PC-9 (cell line): ENCODE measurements at regions of chr19 and their contacts with region 1.

Region 1: GRCh38 chr19:41706741-41707501 is 1.5 kb upstream of the CEACAM5 start:
- DNase-seq: peak; percentile 69 to 81
- H3K4me3 ChIP-seq: peak overlapping the region; percentile 60; the same call in 1 of the 2 replicates
- H3K27ac ChIP-seq: no peak overlapping the region
- H3K4me1 ChIP-seq: peaks cover 18% of the 10 kb centered on the region
- H3K27me3 ChIP-seq: no peaks in the 10 kb centered on the region
- CTCF ChIP-seq: peak; percentile 99

Region 2: GRCh38 chr19:41626877-41627276 is 80.0 kb before region 1 on chr19 and contains the start of gene CEACAM4:
- CTCF ChIA-PET with region 1: no interaction called
- POLR2A ChIA-PET with region 1: no interaction called
- intact Hi-C with region 1: no loop called
- DNase-seq: no peak
- H3K4me3 ChIP-seq: no peak within 1 kb of the TSS
- H3K27ac ChIP-seq: no peak within 1 kb of the TSS
- H3K4me1 ChIP-seq: no peaks in the 10 kb centered on the region
- H3K27me3 ChIP-seq: peaks cover 92% of the 10 kb centered on the region
- CTCF ChIP-seq: no peak
- total RNA-seq, gene CEACAM4: not detected in 2 replicates

Region 3: GRCh38 chr19:41671491-41671890 is 35.4 kb before region 1 on chr19:
- CTCF ChIA-PET with region 1: no interaction called
- POLR2A ChIA-PET with region 1: no interaction called
- intact Hi-C with region 1: no loop called
- DNase-seq: no peak
- H3K4me3 ChIP-seq: no peak overlapping the region
- H3K27ac ChIP-seq: no peak overlapping the region
- H3K4me1 ChIP-seq: no peaks in the 10 kb centered on the region
- H3K27me3 ChIP-seq: peaks cover 55% of the 10 kb centered on the region
- CTCF ChIP-seq: no peak

Region 4: DNA sequence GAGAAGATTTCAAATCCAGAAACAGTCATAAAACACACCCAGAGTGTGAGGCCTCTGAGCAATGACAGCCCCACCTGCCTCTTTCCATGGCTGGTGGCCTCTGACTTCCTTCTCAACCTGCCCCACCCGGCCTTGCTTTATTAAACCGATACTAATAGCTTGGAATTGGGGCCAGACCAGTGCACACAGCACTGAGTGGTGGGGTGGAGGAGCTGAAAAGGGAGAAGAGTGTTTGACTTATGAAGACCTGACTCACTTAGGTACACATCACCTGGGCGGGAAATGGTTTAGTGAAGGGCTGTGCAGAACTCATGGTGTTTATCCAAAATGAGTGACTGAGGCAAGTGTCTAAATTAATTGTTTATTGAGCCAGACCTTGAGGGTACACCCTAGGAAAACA is 27.7 kb after region 1 on chr19:
- CTCF ChIA-PET with region 1: interaction called, 10 read pairs
- POLR2A ChIA-PET with region 1: no interaction called
- intact Hi-C with region 1: no loop called
- DNase-seq: peak; percentile 55 to 98
- H3K4me3 ChIP-seq: peak overlapping the region; percentile 17; the same call in 1 of the 2 replicates
- H3K27ac ChIP-seq: peak overlapping the region; percentile 100
- H3K4me1 ChIP-seq: peaks cover 92% of the 10 kb centered on the region
- H3K27me3 ChIP-seq: no peaks in the 10 kb centered on the region
- CTCF ChIP-seq: no peak

Region 5: GRCh38 chr19:41785653-41786052 is 78.7 kb after region 1 on chr19:
- CTCF ChIA-PET with region 1: interaction called, 10 read pairs
- POLR2A ChIA-PET with region 1: no interaction called
- intact Hi-C with region 1: loop called (anchors 1 kb)
- DNase-seq: peak; percentile 77 to 79
- H3K4me3 ChIP-seq: no peak overlapping the region
- H3K27ac ChIP-seq: peak overlapping the region; percentile 51
- H3K4me1 ChIP-seq: peaks cover 56% of the 10 kb centered on the region
- H3K27me3 ChIP-seq: no peaks in the 10 kb centered on the region
- CTCF ChIP-seq: peak; percentile 92

Region 6: DNA sequence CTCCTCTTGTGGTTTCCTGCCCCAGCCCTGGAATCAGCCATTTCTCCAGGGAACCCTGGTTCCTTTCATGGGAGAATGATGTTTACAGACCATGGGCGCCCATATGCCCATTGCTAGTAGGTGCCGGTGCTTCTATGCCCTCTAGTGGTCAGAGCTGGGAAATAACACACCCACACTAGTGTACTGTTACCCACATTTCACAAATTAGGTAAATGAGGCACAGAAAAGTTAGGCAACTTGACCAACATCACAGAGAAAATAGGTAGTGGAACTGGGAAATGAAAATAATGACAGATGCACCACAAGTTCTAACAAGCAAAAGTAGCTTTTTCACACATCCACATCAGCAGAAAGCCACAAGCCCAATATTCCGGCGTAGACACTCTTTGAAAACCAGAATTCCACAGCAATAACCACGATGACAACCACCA is 88.1 kb after region 1 on chr19:
- CTCF ChIA-PET with region 1: interaction called, 3 read pairs
- POLR2A ChIA-PET with region 1: no interaction called
- intact Hi-C with region 1: loop called (anchors 2 kb)
- DNase-seq: peak in 1 of 2 experiments; percentile 57
- H3K4me3 ChIP-seq: no peak overlapping the region
- H3K27ac ChIP-seq: no peak overlapping the region
- H3K4me1 ChIP-seq: peaks cover 60% of the 10 kb centered on the region
- H3K27me3 ChIP-seq: no peaks in the 10 kb centered on the region
- CTCF ChIP-seq: peak; percentile 93

Region 7: DNA sequence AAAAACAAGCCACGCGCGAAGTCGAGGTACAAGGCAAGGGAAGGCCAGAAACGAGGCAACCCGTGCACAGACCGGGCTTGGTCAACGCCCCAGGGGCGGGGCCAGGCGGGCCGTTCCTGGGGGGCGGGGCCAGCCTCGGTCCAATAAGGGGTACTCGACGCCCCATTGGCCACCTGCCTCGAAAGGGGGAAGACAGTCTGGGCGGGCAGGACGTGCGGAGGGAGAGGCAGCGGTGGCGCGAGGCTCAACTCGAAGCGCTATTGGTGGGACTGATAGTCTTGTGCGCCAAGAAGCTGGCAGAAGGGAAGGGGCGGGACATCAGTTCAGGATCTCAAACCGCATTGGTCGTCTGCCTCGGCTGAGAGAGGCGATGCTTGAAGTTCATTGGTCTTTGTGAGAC is 137.7 kb after region 1 on chr19 and contains the start of gene LYPD4:
- CTCF ChIA-PET with region 1: no interaction called
- POLR2A ChIA-PET with region 1: no interaction called
- intact Hi-C with region 1: no loop called
- DNase-seq: no peak
- H3K4me3 ChIP-seq: no peak within 1 kb of the TSS
- H3K27ac ChIP-seq: no peak within 1 kb of the TSS
- H3K4me1 ChIP-seq: no peaks in the 10 kb centered on the region
- H3K27me3 ChIP-seq: peaks cover 14% of the 10 kb centered on the region
- CTCF ChIP-seq: no peak
- total RNA-seq, gene LYPD4: not detected in 2 replicates

Region 8: DNA sequence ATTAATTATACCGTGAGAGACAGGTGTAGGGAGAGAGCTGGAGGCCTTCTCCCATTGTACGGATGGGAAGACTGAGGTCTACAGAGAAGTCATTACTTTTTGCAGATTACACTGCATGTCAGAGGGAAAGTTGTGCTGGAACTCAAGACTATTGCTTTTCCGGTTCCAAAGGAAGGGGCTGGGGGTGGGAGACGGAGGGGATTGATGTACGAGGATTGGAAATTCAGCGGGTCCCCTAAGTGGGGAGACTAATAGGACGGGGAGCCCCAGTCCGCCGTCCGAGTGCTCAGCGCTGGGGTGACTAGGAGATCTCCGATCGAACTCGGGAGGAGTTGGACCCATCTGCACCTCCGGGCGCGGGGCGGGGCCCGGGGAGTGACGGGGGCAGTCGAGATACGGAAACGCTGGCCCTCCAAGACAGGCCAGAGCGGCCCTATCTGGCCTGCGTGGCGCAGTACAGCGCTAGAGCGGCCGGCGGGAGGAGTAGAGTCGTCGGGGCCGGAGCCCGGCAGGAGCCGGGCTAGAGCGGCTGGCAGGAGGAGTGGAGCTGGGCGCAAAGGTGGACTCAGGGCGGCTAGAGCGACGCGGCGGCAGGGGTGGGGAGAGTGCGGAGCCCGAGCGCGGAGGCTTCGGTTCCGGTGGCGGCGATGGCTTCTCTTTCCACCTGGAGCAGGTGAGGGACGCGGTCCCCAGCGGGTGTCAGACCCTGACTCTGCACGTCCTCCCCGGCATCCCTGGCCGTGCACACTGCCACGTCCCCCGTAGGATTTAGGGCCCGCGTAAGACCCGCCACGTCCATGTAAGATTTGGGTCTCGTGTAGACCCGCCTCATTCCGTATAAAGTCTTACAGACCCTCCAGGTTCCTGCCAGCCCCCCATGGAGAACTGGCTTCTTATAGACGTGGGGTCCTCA is 177.2 kb after region 1 on chr19:
- CTCF ChIA-PET with region 1: no interaction called
- POLR2A ChIA-PET with region 1: no interaction called
- intact Hi-C with region 1: no loop called
- DNase-seq: peak; percentile 91 to 96
- H3K4me3 ChIP-seq: peak overlapping the region; percentile 83
- H3K27ac ChIP-seq: no peak overlapping the region
- H3K4me1 ChIP-seq: peaks cover 31% of the 10 kb centered on the region
- H3K27me3 ChIP-seq: no peaks in the 10 kb centered on the region
- CTCF ChIP-seq: no peak